ENCODE measurements at regions of chr7 and their contacts with region 1.

Region 1: GRCh38 chr7:102849079-102849478 is 63.7 kb upstream of the LRRC17 start:
- DNase-seq: no peak
- H3K4me3 ChIP-seq: no peak overlapping the region
- H3K4me3 Mint-ChIP-seq: no peak overlapping the region
- H3K27ac Mint-ChIP-seq: no peak overlapping the region
- H3K4me1 ChIP-seq: no peaks in the 10 kb centered on the region
- H3K4me1 Mint-ChIP-seq: no peaks in the 10 kb centered on the region
- H3K27me3 ChIP-seq: no peaks in the 10 kb centered on the region
- H3K27me3 Mint-ChIP-seq: peaks cover 9% of the 10 kb centered on the region
- CTCF ChIP-seq: no peak

Region 2: GRCh38 chr7:102859084-102859798 is 10.2 kb after region 1 on chr7:
- CTCF ChIA-PET with region 1: no interaction called
- POLR2A ChIA-PET with region 1: no interaction called
- intact Hi-C with region 1: loop called (anchors 1 kb)
- DNase-seq: no peak
- H3K4me3 ChIP-seq: no peak overlapping the region
- H3K4me3 Mint-ChIP-seq: no peak overlapping the region
- H3K27ac Mint-ChIP-seq: no peak overlapping the region
- H3K4me1 ChIP-seq: no peaks in the 10 kb centered on the region
- H3K4me1 Mint-ChIP-seq: no peaks in the 10 kb centered on the region
- H3K27me3 ChIP-seq: no peaks in the 10 kb centered on the region
- H3K27me3 Mint-ChIP-seq: no peaks in the 10 kb centered on the region
- CTCF ChIP-seq: no peak

Region 3: DNA sequence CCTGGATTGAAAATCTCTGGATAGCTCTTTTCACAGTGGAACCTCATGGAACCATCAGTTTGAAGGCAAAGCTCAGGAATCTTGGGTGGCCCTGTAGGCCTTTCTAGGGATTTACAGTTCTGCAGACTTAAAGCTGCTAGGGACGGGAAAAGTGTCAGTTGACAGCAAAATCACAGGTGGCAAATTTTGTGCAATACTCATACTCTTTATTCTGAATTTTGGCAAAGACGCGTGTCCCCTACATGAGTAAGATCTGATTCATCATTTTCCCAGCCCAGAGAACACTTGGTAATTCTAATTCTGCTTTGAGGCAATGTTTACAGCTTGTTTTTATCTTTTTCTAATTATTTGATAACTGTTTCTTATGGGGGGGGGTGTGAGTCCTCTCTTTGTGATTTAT is 67.3 kb after region 1 on chr7:
- CTCF ChIA-PET with region 1: no interaction called
- POLR2A ChIA-PET with region 1: no interaction called
- intact Hi-C with region 1: no loop called
- DNase-seq: no peak
- H3K4me3 ChIP-seq: no peak overlapping the region
- H3K4me3 Mint-ChIP-seq: no peak overlapping the region
- H3K27ac Mint-ChIP-seq: no peak overlapping the region
- H3K4me1 ChIP-seq: no peaks in the 10 kb centered on the region
- H3K4me1 Mint-ChIP-seq: no peaks in the 10 kb centered on the region
- H3K27me3 ChIP-seq: no peaks in the 10 kb centered on the region
- H3K27me3 Mint-ChIP-seq: no peaks in the 10 kb centered on the region
- CTCF ChIP-seq: no peak

Measured in Caco-2 (cell line).